Calu3 (cell line): ENCODE measurements at regions of chr11 and their contacts with region 1.

Region 1: GRCh38 chr11:3037040-3037944 is 19.9 kb downstream of the CARS1 start:
- DNase-seq: peak; percentile 77
- H3K4me3 Mint-ChIP-seq: no peak overlapping the region
- H3K27ac Mint-ChIP-seq: no peak overlapping the region
- H3K4me1 Mint-ChIP-seq: no peaks in the 10 kb centered on the region
- H3K27me3 Mint-ChIP-seq: no peaks in the 10 kb centered on the region
- CTCF ChIP-seq: peak; percentile 93

Region 2: GRCh38 chr11:3091791-3092602 is 54.7 kb after region 1 on chr11:
- CTCF ChIA-PET with region 1: interaction called, 16 read pairs
- intact Hi-C with region 1: loop called (anchors 2 kb)
- DNase-seq: peak; percentile 87
- H3K4me3 Mint-ChIP-seq: no peak overlapping the region
- H3K27ac Mint-ChIP-seq: no peak overlapping the region
- H3K4me1 Mint-ChIP-seq: peaks cover 30% of the 10 kb centered on the region
- H3K27me3 Mint-ChIP-seq: peaks cover 15% of the 10 kb centered on the region
- CTCF ChIP-seq: peak; percentile 97

Region 3: DNA sequence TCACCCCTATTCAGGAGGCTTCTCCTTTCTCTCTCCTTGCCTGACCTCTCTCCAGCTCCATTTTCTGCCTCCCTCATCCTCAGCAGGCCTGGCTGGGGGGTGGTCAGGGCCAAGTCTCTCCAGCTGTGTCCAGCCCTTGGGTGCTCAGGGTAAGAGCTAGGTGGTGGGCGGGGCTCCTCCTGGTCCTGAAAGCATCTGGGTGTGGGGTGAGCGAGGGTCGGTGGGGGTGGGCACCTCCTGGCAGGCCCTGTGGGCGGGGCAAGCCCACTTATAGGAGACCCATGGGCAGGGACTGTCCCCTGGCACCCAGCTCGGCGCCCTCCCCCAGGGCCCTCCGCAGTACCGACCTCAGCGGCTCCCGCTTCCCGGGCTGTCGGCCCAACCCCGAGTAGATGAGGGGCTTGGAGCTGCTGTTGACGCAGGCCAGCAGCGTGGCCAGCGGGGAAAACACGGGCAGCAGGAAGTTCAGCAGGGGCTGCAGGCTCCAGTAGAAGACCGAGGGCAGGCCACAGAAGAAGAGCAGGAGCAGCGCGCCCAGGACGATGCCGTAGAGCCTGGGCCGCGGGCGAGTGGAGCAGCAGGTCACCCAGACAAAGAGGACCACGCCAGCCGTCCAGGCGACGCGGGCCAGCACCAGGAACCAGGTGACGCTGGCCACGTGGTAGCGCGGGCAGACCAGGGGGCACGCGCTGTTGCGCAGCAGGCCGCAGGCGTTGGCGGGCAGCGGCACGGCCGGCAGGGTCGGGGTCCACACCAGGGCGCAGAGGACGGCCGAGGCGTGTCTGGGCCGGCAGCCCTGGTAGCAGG is 180.6 kb after region 1 on chr11:
- CTCF ChIA-PET with region 1: no interaction called
- intact Hi-C with region 1: loop called (anchors 5 kb)
- DNase-seq: no peak
- H3K4me3 Mint-ChIP-seq: no peak overlapping the region
- H3K27ac Mint-ChIP-seq: no peak overlapping the region
- H3K4me1 Mint-ChIP-seq: peaks cover 8% of the 10 kb centered on the region
- H3K27me3 Mint-ChIP-seq: peaks cover 100% of the 10 kb centered on the region
- CTCF ChIP-seq: no peak